HepG2 (cell line): ENCODE measurements at regions of chr19 and their contacts with region 1.

Region 1: DNA sequence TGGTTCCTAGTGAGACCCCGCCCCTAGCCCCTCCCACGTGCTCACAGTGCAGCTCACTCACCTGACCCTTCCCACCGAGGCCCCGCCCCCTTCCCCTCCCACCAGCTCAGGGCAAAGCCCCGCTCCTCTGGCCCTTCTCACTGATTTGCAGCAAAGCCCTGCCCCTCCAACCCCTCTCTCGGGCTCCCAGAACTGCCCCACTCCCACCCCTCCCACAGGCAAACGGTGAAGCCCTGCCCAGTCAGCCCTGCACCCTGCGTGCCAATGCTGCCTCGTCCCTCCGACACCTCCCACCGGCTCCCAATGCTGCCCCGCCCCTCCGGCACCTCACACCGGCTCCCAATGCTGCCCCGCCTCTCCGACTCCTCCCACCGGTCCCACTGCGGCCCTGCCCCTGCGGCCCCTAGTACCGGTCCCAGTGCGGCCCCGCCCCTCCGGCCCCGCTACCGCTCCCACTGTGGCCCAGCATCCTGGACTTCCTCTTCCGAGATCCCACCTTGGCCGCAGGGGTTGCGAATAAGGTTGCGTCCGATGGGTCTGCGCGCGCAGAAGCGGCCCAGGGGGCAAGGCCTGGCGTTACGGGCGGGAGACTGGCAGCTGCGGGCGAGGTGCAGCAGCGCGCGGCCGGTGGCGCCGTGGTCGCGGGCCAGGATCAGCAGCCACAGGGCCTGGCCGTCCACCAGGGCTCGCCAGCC is 834 bp downstream of the FBXO27 start:
- DNase-seq: no peak
- ATAC-seq: peak; percentile 88
- H3K4me3 ChIP-seq: peak overlapping the region; percentile 48 to 68 (median 59)
- H3K27ac ChIP-seq: peak overlapping the region; percentile 56
- H3K4me1 ChIP-seq: peaks cover 43% of the 10 kb centered on the region
- H3K27me3 ChIP-seq: no peaks in the 10 kb centered on the region; a peak in 1 of 5 replicates
- CTCF ChIP-seq: no peak
- EP300 ChIP-seq: no peak
- POLR2A ChIP-seq: no peak
- RAD21 ChIP-seq: no peak

Region 2: DNA sequence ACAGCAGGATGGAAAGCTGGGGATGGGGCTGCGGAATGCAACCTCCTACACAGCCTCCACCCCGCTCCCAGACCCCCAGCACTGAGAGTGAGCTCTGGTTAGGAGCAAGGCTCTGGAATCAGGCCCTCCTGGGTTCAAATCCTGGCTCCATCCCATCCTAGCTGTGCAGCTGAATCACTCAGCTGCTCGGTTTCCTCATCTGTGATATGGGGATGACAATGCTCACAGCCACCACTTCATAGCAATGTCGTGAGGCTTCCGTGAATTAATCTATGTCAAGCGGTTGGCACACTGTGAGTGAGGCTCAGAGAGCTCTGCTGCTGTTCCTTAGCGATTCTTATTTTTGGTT is 53.2 kb after region 1 on chr19:
- CTCF ChIA-PET with region 1: no interaction called
- POLR2A ChIA-PET with region 1: no interaction called
- in situ Hi-C with region 1: loop called (anchors 5 kb)
- intact Hi-C with region 1: no loop called
- DNase-seq: no peak
- ATAC-seq: no peak
- H3K4me3 ChIP-seq: no peak overlapping the region
- H3K27ac ChIP-seq: no peak overlapping the region
- H3K4me1 ChIP-seq: peaks cover 7% of the 10 kb centered on the region; the same call in 1 of the 2 replicates
- H3K27me3 ChIP-seq: peaks cover 3 to 27% of the 10 kb centered on the region in 2 experiments
- CTCF ChIP-seq: no peak
- EP300 ChIP-seq: no peak
- POLR2A ChIP-seq: no peak
- RAD21 ChIP-seq: no peak